Head of caudate nucleus (tissue), 42 donors: ENCODE measurements at regions of chr9 and their contacts with region 1.

Region 1: GRCh38 chr9:83707768-83708514 is at the start of gene UBQLN1:
- DNase-seq: peak; percentile 81 to 96 (median 90)

Region 2: DNA sequence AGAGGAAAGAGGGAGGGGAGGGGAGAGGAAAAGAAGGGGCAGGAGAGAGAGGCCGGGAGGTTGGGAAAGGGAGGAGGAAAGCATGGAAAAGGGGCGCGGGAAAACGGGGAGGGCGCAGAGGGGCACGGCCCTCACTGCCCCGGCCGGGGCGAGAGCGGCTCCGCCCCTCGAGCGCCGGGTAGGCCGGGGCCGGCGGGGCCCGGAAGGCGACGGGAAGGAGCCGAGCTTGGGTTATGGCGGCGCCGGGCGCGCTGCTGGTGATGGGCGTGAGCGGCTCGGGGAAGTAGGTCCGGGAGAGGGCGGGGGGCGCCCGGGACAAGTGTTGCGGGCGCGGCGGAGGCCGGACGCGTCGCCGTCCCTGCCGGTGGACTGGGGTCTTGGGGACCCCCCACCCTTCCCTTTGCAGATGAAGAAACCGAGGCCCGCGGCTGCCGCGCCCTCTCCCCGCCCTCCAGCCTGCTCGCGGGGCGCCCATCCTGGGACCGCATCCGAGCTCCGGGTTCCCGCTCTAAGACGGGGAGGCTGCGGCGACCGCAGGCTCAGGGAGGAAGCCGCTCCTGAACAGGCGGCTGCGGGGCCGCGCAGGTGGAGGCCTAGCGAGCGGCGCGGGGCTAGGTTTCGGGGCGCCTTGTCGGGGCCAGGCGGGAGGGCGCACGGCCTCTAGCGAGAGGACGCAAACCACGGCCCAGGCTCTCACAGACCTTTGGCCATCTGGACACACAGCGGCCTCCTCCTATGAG is 84.8 kb before region 1 on chr9 and contains the start of gene IDNK:
- intact Hi-C with region 1: loop called (anchors 10 kb)
- DNase-seq: peak; percentile 8 to 84 (median 66)